ENCODE measurements at regions of chr2 and their contacts with region 1.

Region 1: DNA sequence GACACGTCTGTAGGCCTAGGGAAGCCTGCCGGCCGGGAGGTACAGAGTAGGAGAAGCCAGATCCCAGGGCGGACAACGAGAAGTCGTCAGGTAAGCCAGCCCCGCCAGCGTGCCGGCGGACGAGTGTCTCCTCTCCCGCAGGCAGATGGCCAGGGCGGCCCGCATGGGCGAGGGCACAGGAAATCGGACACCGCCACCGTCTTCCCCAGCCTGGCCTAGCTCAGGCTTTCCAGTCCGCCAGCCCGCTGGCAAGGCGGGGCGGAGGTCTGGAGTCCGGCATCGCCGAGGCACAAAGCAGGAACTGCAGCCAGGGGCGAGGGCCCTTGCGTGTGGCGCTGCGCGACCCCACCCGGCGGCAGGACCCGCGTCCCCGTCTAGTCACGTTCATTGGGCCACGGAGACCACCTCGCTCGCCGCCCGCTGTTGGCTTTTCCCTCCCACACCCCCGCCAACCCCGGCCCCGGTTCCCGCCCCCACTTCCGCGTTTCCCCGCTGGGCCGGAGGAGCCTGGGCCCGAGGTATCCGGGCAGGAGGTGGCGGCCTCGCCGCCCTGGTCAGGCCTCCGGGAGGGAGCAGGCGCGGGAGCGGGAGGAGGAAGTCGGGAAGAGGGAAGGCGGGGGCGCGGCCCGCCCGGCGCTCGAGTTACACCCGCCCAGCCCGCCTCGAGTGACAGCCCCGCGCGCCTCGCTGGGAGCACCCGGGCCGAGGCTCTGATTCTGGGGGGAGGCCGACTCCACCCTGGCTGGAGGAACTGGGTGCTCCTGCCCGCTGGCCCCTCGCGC is at the start of gene GPD2:
- DNase-seq: peak; percentile 89
- H3K4me3 Mint-ChIP-seq: peak within 1 kb of the TSS; percentile 93
- H3K27ac Mint-ChIP-seq: peak within 1 kb of the TSS; percentile 98
- H3K4me1 Mint-ChIP-seq: peaks cover 37% of the 10 kb centered on the region
- H3K27me3 Mint-ChIP-seq: no peaks in the 10 kb centered on the region
- total RNA-seq, gene GPD2: 18.0 and 19.7 TPM in 2 replicates

Region 2: GRCh38 chr2:156341452-156342253 is 94.3 kb before region 1 on chr2:
- intact Hi-C with region 1: loop called (anchors 1 kb)
- DNase-seq: peak; percentile 96
- H3K4me3 Mint-ChIP-seq: peak overlapping the region; percentile 93
- H3K27ac Mint-ChIP-seq: peak overlapping the region; percentile 99
- H3K4me1 Mint-ChIP-seq: peaks cover 48% of the 10 kb centered on the region
- H3K27me3 Mint-ChIP-seq: no peaks in the 10 kb centered on the region

Region 3: GRCh38 chr2:156380117-156380645 is 55.7 kb before region 1 on chr2:
- intact Hi-C with region 1: loop called (anchors 10 kb)
- DNase-seq: no peak
- H3K4me3 Mint-ChIP-seq: no peak overlapping the region
- H3K27ac Mint-ChIP-seq: peak overlapping the region; percentile 56
- H3K4me1 Mint-ChIP-seq: peaks cover 29% of the 10 kb centered on the region
- H3K27me3 Mint-ChIP-seq: no peaks in the 10 kb centered on the region

Region 4: GRCh38 chr2:156455451-156455901 is 19.6 kb after region 1 on chr2:
- intact Hi-C with region 1: loop called (anchors 2 kb)
- DNase-seq: no peak
- H3K4me3 Mint-ChIP-seq: no peak overlapping the region
- H3K27ac Mint-ChIP-seq: no peak overlapping the region
- H3K4me1 Mint-ChIP-seq: peaks cover 17% of the 10 kb centered on the region
- H3K27me3 Mint-ChIP-seq: no peaks in the 10 kb centered on the region

Region 5: DNA sequence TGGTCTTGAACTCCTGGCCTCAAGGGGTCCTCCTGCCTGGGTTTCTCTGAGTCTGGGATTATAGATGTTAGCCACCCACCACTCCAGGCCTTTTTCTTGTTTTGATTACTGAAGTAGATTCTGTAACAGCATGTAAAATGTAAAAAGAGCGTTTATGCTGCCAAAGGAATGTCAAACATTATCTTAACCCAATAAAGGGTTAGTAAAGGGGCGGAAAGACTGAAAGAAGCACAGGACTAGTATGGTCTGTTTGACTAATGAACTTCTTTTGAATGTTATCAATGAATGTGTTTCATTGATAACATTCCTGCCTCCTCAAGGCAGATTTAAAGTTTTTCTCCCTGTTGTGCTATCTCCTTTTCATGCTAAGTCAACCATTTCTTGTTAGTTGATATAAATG is 29.7 kb after region 1 on chr2:
- intact Hi-C with region 1: no loop called
- DNase-seq: no peak
- H3K4me3 Mint-ChIP-seq: no peak overlapping the region
- H3K27ac Mint-ChIP-seq: no peak overlapping the region
- H3K4me1 Mint-ChIP-seq: peaks cover 14% of the 10 kb centered on the region
- H3K27me3 Mint-ChIP-seq: no peaks in the 10 kb centered on the region

Region 6: DNA sequence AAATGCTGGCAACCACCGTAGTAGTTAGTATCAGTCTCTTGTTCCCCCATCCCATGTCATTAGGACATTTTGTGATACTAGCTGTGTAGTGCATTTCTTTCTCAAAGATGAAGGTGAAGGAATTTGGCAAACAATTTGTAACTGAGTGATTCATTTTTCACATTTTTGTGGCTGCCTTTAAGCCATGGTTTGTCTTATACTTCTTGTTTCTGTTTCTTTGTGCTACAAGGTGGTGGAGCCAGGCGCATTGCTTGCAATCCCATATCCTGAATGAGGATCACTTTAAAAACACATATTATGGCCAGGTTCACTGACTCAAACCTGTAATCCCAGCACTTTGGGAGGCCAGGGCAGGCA is 40.9 kb after region 1 on chr2:
- intact Hi-C with region 1: loop called (anchors 2 kb)
- DNase-seq: peak; percentile 64
- H3K4me3 Mint-ChIP-seq: peak overlapping the region; percentile 57
- H3K27ac Mint-ChIP-seq: peak overlapping the region; percentile 76
- H3K4me1 Mint-ChIP-seq: peaks cover 46% of the 10 kb centered on the region
- H3K27me3 Mint-ChIP-seq: no peaks in the 10 kb centered on the region

Region 7: GRCh38 chr2:156573710-156574109 is 137.8 kb after region 1 on chr2:
- intact Hi-C with region 1: loop called (anchors 5 kb)
- DNase-seq: no peak
- H3K4me3 Mint-ChIP-seq: no peak overlapping the region
- H3K27ac Mint-ChIP-seq: no peak overlapping the region
- H3K4me1 Mint-ChIP-seq: peaks cover 20% of the 10 kb centered on the region
- H3K27me3 Mint-ChIP-seq: no peaks in the 10 kb centered on the region

Region 8: GRCh38 chr2:156592809-156593593 is 157.1 kb after region 1 on chr2:
- intact Hi-C with region 1: no loop called
- DNase-seq: no peak
- H3K4me3 Mint-ChIP-seq: no peak overlapping the region
- H3K27ac Mint-ChIP-seq: no peak overlapping the region
- H3K4me1 Mint-ChIP-seq: peaks cover 5% of the 10 kb centered on the region
- H3K27me3 Mint-ChIP-seq: peaks cover 14% of the 10 kb centered on the region

Measured in activated CD4-positive, alpha-beta T cell treated with anti-CD3 and anti-CD28 coated beads, Interleukin-2, amount 10 ng/mL, durations not matched to agents 24 days and 14 days (primary cell).